Naive thymus-derived CD8-positive, alpha-beta T cell (primary cell): ENCODE measurements at regions of chr4 and their contacts with region 1.

Region 1: DNA sequence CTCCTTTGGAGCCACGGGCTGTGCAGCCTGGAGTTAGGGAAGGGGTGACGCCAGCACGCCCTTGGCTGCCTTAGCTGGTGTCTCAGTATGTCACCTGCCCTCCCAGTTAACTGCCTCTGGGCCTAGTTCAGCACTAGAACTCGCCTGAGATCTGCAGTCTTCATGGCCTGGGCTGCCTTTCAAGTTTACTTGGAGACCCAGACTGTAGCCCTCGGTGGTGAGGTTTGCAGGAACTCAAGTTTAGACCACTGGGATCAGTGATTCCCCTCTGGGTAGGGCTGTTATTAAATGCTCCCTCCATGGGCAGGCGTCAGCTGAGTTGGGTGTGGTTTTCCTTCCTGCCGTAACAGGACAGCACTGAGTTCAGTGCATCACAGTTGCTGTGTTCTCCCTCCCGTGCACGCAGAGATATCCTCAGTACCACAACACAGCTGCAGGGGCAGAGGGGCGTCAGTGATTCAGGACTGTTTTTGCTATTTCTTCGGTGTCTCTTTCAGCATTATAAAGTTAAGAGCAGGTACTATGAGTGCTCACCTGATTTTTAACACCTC is 30.5 kb downstream of the PLAC8 start:
- DNase-seq: peak; percentile 35 to 90 (median 75)
- ATAC-seq: peak; percentile 97 to 99
- H3K4me3 Mint-ChIP-seq: peak overlapping the region; percentile 20 to 87 (median 62)
- H3K27ac Mint-ChIP-seq: peak overlapping the region; percentile 94 to 99 (median 98)
- H3K4me1 Mint-ChIP-seq: peaks cover 26 to 60% (median 44%) of the 10 kb centered on the region in 4 donors
- H3K27me3 Mint-ChIP-seq: no peaks in the 10 kb centered on the region

Region 2: DNA sequence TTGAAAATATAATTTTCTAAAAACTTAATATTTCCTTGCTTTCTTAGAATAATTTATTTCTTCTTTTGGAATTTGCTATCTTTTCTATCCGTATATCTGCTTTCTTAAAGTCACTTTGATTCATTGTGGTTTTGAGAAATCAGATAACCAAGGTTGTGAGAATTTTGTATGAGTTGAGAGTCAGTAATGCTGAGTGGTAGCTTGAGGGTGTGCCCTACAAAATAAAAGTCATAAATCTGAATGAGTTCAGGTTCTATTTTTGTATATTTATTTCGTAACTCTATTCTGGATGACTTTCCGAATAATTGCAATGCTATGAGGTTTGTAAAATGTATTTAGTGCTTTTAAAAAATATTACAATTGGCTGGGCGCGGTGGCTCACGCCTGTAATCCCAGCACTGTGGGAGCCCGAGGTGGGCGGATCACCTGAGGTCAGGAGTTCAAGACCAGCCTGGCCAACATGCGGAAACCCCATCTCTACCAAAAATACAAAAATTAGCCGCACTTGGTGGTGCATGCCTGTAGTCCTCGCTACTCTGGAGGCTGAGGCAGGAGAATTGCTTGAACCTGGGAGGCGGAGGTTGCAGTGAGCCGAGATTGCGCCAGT is 40.1 kb before region 1 on chr4:
- POLR2A ChIA-PET with region 1: no interaction called
- DNase-seq: no peak
- ATAC-seq: no peak
- H3K4me3 Mint-ChIP-seq: no peak overlapping the region
- H3K27ac Mint-ChIP-seq: no peak overlapping the region
- H3K4me1 Mint-ChIP-seq: peaks cover 12 to 36% (median 27%) of the 10 kb centered on the region in 4 donors
- H3K27me3 Mint-ChIP-seq: no peaks in the 10 kb centered on the region

Region 3: GRCh38 chr4:83097018-83097417 is 13.0 kb after region 1 on chr4:
- POLR2A ChIA-PET with region 1: interaction called, 13 read pairs
- DNase-seq: no peak
- ATAC-seq: no peak
- H3K4me3 Mint-ChIP-seq: peak overlapping the region in 1 of 10 donors; percentile 16
- H3K27ac Mint-ChIP-seq: peak overlapping the region; percentile 24 to 87 (median 71)
- H3K4me1 Mint-ChIP-seq: peaks cover 25 to 75% (median 62%) of the 10 kb centered on the region in 4 donors
- H3K27me3 Mint-ChIP-seq: no peaks in the 10 kb centered on the region

Region 4: GRCh38 chr4:83138946-83139345 is 54.9 kb after region 1 on chr4:
- POLR2A ChIA-PET with region 1: no interaction called
- DNase-seq: peak in 6 of 10 donors; percentile 22 to 58 (median 40)
- ATAC-seq: peak; percentile 95 to 99
- H3K4me3 Mint-ChIP-seq: peak overlapping the region in 9 of 10 donors; percentile 10 to 72 (median 51)
- H3K27ac Mint-ChIP-seq: peak overlapping the region; percentile 82 to 94 (median 88)
- H3K4me1 Mint-ChIP-seq: peaks cover 27 to 52% (median 33%) of the 10 kb centered on the region in 4 donors
- H3K27me3 Mint-ChIP-seq: no peaks in the 10 kb centered on the region

Region 5: DNA sequence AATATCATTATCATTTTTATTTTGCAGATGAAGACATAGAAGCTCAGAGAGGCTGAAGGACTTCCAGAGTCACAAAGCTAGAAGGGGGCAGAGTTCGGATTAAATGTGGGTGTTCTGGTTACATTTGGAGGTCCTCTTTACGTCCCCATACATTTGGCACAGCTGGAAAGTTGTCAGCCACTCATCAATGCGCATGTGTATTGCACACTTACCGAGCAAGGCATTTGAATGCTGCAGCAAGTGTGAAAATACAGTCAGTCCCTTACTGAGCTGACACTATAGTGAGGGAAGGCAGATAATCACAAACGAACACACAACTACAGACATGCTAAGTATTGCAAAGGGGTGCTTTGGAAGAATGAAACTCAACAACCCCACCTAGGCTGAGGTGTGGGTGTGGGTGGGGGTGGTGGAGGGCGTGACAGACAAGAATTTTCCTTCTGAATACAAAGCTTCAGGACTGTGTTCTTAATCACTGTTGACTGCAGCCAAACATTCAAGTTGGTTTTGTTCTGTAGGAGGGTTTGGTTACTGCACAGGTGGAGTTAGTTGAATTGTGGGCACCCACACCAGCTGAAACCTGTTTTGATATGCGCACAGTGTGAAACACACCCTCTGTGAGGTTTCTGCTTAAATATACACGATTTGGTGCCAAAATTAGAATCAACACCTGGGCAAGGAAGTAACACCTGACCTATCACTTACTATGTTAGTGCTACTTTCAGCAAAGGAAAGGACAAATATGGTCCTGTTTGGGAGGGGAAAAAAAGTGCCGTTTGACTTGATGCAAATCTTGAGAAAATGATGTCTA is 128.2 kb after region 1 on chr4:
- POLR2A ChIA-PET with region 1: interaction called, 13 read pairs
- DNase-seq: peak; percentile 24 to 94 (median 76)
- ATAC-seq: peak; percentile 89 to 95
- H3K4me3 Mint-ChIP-seq: peak overlapping the region; percentile 57 to 83 (median 71)
- H3K27ac Mint-ChIP-seq: peak overlapping the region; percentile 83 to 97 (median 94)
- H3K4me1 Mint-ChIP-seq: peaks cover 37 to 88% (median 82%) of the 10 kb centered on the region in 4 donors
- H3K27me3 Mint-ChIP-seq: no peaks in the 10 kb centered on the region

Region 6: GRCh38 chr4:83217721-83218522 is 133.9 kb after region 1 on chr4:
- POLR2A ChIA-PET with region 1: interaction called, 13 read pairs
- DNase-seq: peak; percentile 17 to 90 (median 74)
- ATAC-seq: peak; percentile 91 to 93
- H3K4me3 Mint-ChIP-seq: peak overlapping the region; percentile 26 to 89 (median 64)
- H3K27ac Mint-ChIP-seq: peak overlapping the region; percentile 88 to 97 (median 93)
- H3K4me1 Mint-ChIP-seq: peaks cover 31 to 97% (median 70%) of the 10 kb centered on the region in 4 donors
- H3K27me3 Mint-ChIP-seq: no peaks in the 10 kb centered on the region

Region 7: DNA sequence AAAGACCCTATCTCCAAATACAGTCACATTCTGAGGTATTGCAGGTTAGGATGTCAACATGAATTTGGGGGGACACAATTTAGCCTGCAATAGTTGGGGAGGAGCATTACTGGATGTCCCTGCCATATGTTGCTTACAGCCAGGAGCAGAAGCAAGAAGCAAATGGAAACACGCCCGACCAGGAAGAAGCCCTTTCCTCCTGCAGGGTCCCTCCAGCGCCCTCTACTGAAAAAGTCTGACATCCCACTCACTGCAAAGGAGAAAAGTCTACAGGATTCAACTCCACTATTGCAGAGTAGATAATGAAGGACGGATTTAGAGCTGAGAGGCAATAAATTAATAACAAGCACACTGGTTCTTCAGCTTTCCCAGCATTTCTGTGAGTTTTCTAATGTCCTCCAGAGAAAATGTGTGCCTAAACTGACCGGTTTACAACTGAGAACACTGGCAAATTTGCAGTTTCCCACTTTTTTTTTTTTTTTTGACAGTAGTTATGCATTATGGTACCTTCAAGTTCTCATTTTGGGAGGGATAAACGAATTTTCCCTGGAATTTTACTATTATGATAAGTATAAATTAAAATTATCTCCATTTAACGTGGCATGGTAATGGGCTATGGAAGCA is 168.9 kb after region 1 on chr4:
- POLR2A ChIA-PET with region 1: interaction called, 13 read pairs
- DNase-seq: peak; percentile 46 to 87 (median 76)
- ATAC-seq: peak; percentile 93 to 95
- H3K4me3 Mint-ChIP-seq: peak overlapping the region in 4 of 10 donors; percentile 19 to 59 (median 30)
- H3K27ac Mint-ChIP-seq: peak overlapping the region; percentile 26 to 88 (median 68)
- H3K4me1 Mint-ChIP-seq: peaks cover 16 to 58% (median 24%) of the 10 kb centered on the region in 4 donors
- H3K27me3 Mint-ChIP-seq: no peaks in the 10 kb centered on the region

Region 8: GRCh38 chr4:83284193-83285054 is 200.4 kb after region 1 on chr4 and contains the start of gene COQ2:
- POLR2A ChIA-PET with region 1: interaction called, 10 read pairs
- DNase-seq: peak; percentile 87 to 96 (median 93)
- ATAC-seq: peak; percentile 90
- H3K4me3 Mint-ChIP-seq: peak within 1 kb of the TSS; percentile 87 to 99 (median 98)
- H3K27ac Mint-ChIP-seq: peak within 1 kb of the TSS; percentile 96 to 99 (median 98)
- H3K4me1 Mint-ChIP-seq: peaks cover 18 to 54% (median 33%) of the 10 kb centered on the region in 4 donors
- H3K27me3 Mint-ChIP-seq: no peaks in the 10 kb centered on the region
- polyA plus RNA-seq, gene COQ2: 5.0 to 8.1 (median 5.2) TPM